Activated B cell treated with CpG ODN at 0.5 μM for 24 hours (primary cell): ENCODE measurements at regions of chr22 and their contacts with region 1.

Region 1: GRCh38 chr22:36301384-36301828 is 48.5 kb downstream of the APOL1 start:
- DNase-seq: peak; percentile 74
- ATAC-seq: peak; percentile 89
- H3K4me3 Mint-ChIP-seq: no peak overlapping the region
- H3K27ac Mint-ChIP-seq: peak overlapping the region; percentile 21
- H3K4me1 Mint-ChIP-seq: peaks cover 7% of the 10 kb centered on the region
- H3K27me3 Mint-ChIP-seq: no peaks in the 10 kb centered on the region
- CTCF ChIP-seq: peak; percentile 70

Region 2: GRCh38 chr22:36311386-36312358 is 10.3 kb after region 1 on chr22:
- CTCF ChIA-PET with region 1: interaction called, 11 read pairs
- POLR2A ChIA-PET with region 1: interaction called, 3 read pairs
- intact Hi-C with region 1: no loop called
- DNase-seq: no peak
- ATAC-seq: no peak
- H3K4me3 Mint-ChIP-seq: no peak overlapping the region
- H3K27ac Mint-ChIP-seq: no peak overlapping the region
- H3K4me1 Mint-ChIP-seq: peaks cover 6% of the 10 kb centered on the region
- H3K27me3 Mint-ChIP-seq: no peaks in the 10 kb centered on the region
- CTCF ChIP-seq: no peak

Region 3: DNA sequence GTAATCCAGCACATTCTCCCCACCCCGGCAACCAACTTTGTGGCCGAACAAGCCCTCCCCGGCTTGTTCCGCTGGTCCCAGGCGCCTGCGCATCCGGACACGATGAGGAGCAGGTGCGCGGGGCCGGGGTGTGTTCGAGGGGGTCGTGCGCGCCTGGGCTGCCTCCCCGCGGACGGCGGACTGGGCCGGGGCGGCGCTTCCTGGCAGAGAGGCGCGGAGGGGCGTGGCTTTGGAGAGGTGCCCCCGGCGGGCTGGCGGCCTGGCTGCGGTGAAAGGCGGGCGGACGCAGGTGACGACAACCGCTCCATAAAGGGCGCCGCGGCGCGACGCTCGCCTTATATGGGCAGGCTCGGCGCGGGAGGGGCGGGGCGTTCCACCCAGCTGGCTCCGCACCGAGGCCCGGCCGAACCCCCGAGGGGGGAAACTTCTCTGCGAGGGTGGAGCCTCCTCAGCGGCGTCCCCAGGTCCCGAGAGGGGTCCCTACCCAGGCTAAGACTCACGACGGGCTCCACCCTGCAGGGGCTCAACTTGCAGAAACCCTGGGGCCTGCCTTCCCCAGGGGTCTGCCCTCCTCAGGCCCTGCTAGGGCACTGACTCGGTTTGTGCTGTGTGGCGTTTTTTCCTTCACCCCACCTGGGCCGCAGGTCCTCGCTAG is 153.6 kb after region 1 on chr22:
- CTCF ChIA-PET with region 1: interaction called, 4 read pairs
- POLR2A ChIA-PET with region 1: interaction called, 3 read pairs
- intact Hi-C with region 1: loop called (anchors 1 kb)
- DNase-seq: peak; percentile 91
- ATAC-seq: peak; percentile 66
- H3K4me3 Mint-ChIP-seq: peak overlapping the region; percentile 69
- H3K27ac Mint-ChIP-seq: peak overlapping the region; percentile 95
- H3K4me1 Mint-ChIP-seq: peaks cover 56% of the 10 kb centered on the region
- H3K27me3 Mint-ChIP-seq: no peaks in the 10 kb centered on the region
- CTCF ChIP-seq: no peak

Region 4: GRCh38 chr22:36470162-36470993 is 169.0 kb after region 1 on chr22:
- CTCF ChIA-PET with region 1: interaction called, 144 read pairs
- POLR2A ChIA-PET with region 1: interaction called, 20 read pairs
- intact Hi-C with region 1: loop called (anchors 1 kb)
- DNase-seq: peak; percentile 62
- ATAC-seq: peak; percentile 96
- H3K4me3 Mint-ChIP-seq: no peak overlapping the region
- H3K27ac Mint-ChIP-seq: no peak overlapping the region
- H3K4me1 Mint-ChIP-seq: peaks cover 6% of the 10 kb centered on the region
- H3K27me3 Mint-ChIP-seq: no peaks in the 10 kb centered on the region
- CTCF ChIP-seq: no peak

Region 5: GRCh38 chr22:36486619-36487384 is 185.4 kb after region 1 on chr22:
- CTCF ChIA-PET with region 1: interaction called, 36 read pairs
- POLR2A ChIA-PET with region 1: interaction called, 5 read pairs
- intact Hi-C with region 1: loop called (anchors 1 kb)
- DNase-seq: no peak
- ATAC-seq: no peak
- H3K4me3 Mint-ChIP-seq: no peak overlapping the region
- H3K27ac Mint-ChIP-seq: no peak overlapping the region
- H3K4me1 Mint-ChIP-seq: peaks cover 12% of the 10 kb centered on the region
- H3K27me3 Mint-ChIP-seq: no peaks in the 10 kb centered on the region
- CTCF ChIP-seq: peak; percentile 19

Region 6: DNA sequence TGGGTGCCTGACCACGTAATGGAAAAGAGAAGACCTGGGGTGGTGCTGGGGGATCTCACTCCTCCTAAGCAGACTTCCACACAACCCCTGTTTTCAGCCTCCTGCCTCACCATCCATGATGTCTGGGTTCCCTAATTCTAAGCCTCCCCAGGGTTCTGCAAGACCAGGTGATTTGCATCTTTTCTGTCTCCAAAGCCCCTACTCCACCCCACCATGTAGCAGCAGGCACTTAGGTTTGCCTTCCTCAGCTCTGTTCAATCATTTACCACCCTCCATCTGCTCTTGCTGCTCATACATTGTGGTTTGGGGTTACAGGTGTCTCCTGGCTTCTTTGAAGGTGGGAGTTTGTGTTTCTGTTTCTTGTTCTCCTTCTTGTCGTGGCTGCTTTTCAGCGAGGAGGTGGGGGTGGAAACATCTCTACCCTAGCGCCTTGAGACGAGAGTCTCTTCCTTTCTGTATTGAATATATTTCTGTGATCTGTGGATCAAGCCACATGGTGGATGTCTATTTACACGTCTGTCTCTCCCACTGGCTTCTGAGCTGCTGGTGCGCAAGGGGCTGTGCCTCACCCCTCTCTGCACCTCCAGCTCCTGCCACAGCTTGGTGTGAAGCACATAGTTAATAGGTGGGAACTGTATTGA is 917.5 kb after region 1 on chr22:
- CTCF ChIA-PET with region 1: no interaction called
- POLR2A ChIA-PET with region 1: no interaction called
- intact Hi-C with region 1: no loop called
- DNase-seq: no peak
- ATAC-seq: peak; percentile 83
- H3K4me3 Mint-ChIP-seq: peak overlapping the region; percentile 71
- H3K27ac Mint-ChIP-seq: peak overlapping the region; percentile 99
- H3K4me1 Mint-ChIP-seq: peaks cover 78% of the 10 kb centered on the region
- H3K27me3 Mint-ChIP-seq: no peaks in the 10 kb centered on the region
- CTCF ChIP-seq: no peak